Caco-2 (cell line): ENCODE measurements at regions of chr7 and their contacts with region 1.

Region 1: DNA sequence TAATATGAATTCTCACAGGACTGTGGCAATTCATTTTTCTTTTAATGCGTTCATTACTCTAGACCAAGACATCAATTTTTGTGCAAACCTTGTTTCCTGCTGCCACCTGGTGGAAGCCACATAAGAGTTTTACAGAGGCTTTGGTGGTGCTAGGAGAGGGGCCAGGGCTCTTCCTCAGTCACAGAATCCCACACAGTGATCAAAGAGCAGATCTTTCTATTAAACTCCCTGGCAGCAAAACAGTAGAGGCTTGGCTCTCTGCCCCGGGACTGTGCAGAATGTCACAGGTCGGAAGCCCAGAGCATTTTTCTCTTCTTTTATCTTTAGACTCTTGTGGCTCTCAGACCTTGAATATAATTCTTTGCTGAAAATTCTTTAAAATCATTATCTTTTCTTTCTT is 506.4 kb upstream of the C7orf33 start:
- DNase-seq: peak; percentile 62 to 64
- H3K4me3 ChIP-seq: no peak overlapping the region
- H3K4me3 Mint-ChIP-seq: no peak overlapping the region
- H3K27ac Mint-ChIP-seq: no peak overlapping the region
- H3K4me1 ChIP-seq: peaks cover 4% of the 10 kb centered on the region; the same call in 1 of the 2 replicates
- H3K4me1 Mint-ChIP-seq: no peaks in the 10 kb centered on the region
- H3K27me3 ChIP-seq: no peaks in the 10 kb centered on the region
- H3K27me3 Mint-ChIP-seq: peaks cover 6% of the 10 kb centered on the region
- CTCF ChIP-seq: peak; percentile 74 to 79

Region 2: GRCh38 chr7:147245292-147245691 is 838.8 kb before region 1 on chr7:
- CTCF ChIA-PET with region 1: no interaction called
- POLR2A ChIA-PET with region 1: no interaction called
- intact Hi-C with region 1: loop called (anchors 1 kb)
- DNase-seq: peak; percentile 53 to 72
- H3K4me3 ChIP-seq: no peak overlapping the region
- H3K4me3 Mint-ChIP-seq: no peak overlapping the region
- H3K27ac Mint-ChIP-seq: no peak overlapping the region
- H3K4me1 ChIP-seq: no peaks in the 10 kb centered on the region
- H3K4me1 Mint-ChIP-seq: no peaks in the 10 kb centered on the region
- H3K27me3 ChIP-seq: no peaks in the 10 kb centered on the region
- H3K27me3 Mint-ChIP-seq: no peaks in the 10 kb centered on the region
- CTCF ChIP-seq: peak; percentile 77 to 94

Region 3: DNA sequence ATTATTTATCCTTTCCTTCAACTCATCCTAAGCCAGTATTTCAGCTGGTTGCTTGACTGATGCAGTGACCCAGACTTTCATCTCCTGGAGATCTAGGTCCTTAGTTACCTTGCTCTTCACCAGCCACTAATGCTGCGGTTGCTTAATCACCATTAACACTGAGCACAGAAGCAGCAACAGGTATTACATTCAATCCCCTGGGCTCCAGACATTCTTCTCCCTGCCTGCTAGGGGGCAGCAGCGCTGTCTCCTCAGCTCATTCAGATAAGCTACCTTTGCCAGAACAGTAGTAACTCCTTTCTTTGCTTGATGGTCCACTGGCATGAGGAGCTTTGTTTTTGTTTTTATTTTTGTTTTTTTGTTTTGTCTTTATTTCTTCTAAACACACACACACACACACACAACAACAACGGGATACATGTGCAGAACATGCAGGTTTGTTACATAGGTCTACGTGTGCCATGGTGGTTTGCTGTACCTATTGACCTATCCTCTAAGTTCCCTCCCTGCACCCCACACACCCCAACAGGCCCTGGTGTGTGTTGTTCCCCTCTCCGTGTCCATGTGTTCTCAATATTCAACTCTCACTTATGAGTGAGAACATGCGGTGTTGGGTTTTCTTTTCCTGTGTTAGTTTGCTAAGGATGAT is 536.8 kb before region 1 on chr7:
- CTCF ChIA-PET with region 1: no interaction called
- POLR2A ChIA-PET with region 1: no interaction called
- intact Hi-C with region 1: loop called (anchors 1 kb)
- DNase-seq: peak; percentile 37 to 56
- H3K4me3 ChIP-seq: no peak overlapping the region
- H3K4me3 Mint-ChIP-seq: no peak overlapping the region
- H3K27ac Mint-ChIP-seq: no peak overlapping the region
- H3K4me1 ChIP-seq: no peaks in the 10 kb centered on the region
- H3K4me1 Mint-ChIP-seq: no peaks in the 10 kb centered on the region
- H3K27me3 ChIP-seq: no peaks in the 10 kb centered on the region
- H3K27me3 Mint-ChIP-seq: no peaks in the 10 kb centered on the region
- CTCF ChIP-seq: peak; percentile 46 to 47

Region 4: GRCh38 chr7:147869456-147869855 is 214.7 kb before region 1 on chr7:
- CTCF ChIA-PET with region 1: no interaction called
- POLR2A ChIA-PET with region 1: no interaction called
- intact Hi-C with region 1: no loop called
- DNase-seq: no peak
- H3K4me3 ChIP-seq: no peak overlapping the region
- H3K4me3 Mint-ChIP-seq: no peak overlapping the region
- H3K27ac Mint-ChIP-seq: no peak overlapping the region
- H3K4me1 ChIP-seq: no peaks in the 10 kb centered on the region
- H3K4me1 Mint-ChIP-seq: no peaks in the 10 kb centered on the region
- H3K27me3 ChIP-seq: no peaks in the 10 kb centered on the region
- H3K27me3 Mint-ChIP-seq: peaks cover 7% of the 10 kb centered on the region
- CTCF ChIP-seq: no peak

Region 5: GRCh38 chr7:148067381-148067780 is 16.8 kb before region 1 on chr7:
- CTCF ChIA-PET with region 1: no interaction called
- POLR2A ChIA-PET with region 1: no interaction called
- intact Hi-C with region 1: no loop called
- DNase-seq: no peak
- H3K4me3 ChIP-seq: no peak overlapping the region
- H3K4me3 Mint-ChIP-seq: no peak overlapping the region
- H3K27ac Mint-ChIP-seq: no peak overlapping the region
- H3K4me1 ChIP-seq: no peaks in the 10 kb centered on the region
- H3K4me1 Mint-ChIP-seq: no peaks in the 10 kb centered on the region
- H3K27me3 ChIP-seq: no peaks in the 10 kb centered on the region
- H3K27me3 Mint-ChIP-seq: peaks cover 6% of the 10 kb centered on the region
- CTCF ChIP-seq: no peak